Right ventricle myocardium superior (tissue), 1 donor: ENCODE measurements at regions of chr15 and their contacts with region 1.

Region 1: GRCh38 chr15:81155375-81156218 is 21.5 kb downstream of the CFAP161 start:
- DNase-seq: no peak
- ATAC-seq: peak; percentile 46

Region 2: DNA sequence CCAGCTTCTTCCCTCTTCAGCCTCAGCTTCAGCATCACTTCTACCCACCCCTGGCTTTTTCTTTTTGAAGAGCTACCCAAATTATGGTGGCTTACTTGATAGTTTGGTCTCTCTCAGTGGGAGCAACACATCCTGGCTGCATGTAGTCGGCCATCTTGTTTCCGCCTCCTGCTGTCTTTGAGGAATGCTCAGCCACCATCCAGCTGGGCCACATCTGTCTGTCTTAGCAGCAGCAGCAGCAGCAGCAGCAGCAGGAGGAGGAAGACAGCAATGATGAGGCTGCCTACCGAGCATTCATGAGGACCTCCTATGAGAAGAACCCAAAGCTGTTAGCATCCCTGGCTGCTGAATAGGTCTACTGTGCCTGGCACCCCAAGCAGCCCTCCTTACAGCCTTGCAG is 60.8 kb after region 1 on chr15:
- intact Hi-C with region 1: no loop called
- DNase-seq: no peak
- ATAC-seq: peak; percentile 14

Region 3: DNA sequence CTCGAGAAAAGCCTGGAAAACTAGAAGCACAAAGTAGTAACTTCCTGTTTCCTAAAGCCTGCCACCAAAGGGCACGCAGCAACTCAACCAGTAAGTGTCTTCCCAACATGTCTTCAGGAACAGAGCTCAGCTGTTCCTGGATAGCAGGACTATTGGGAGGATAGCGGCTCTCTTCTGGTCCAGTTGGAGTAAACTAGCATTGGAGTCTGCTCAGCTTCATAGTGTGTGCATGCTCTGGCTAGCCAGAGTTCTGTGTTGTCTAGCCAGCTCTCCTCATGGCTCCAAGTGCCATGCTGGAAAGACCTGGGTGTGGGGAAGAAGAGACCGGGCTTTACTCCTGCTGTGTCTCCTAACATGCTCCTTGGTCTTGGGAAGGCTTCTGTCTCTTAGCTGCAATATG is 104.2 kb after region 1 on chr15:
- intact Hi-C with region 1: loop called (anchors 2 kb)
- DNase-seq: no peak
- ATAC-seq: no peak

Region 4: GRCh38 chr15:81270188-81270587 is 114.6 kb after region 1 on chr15:
- intact Hi-C with region 1: no loop called
- DNase-seq: no peak
- ATAC-seq: no peak